ENCODE measurements at regions of chr7 and their contacts with region 1.

Region 1: DNA sequence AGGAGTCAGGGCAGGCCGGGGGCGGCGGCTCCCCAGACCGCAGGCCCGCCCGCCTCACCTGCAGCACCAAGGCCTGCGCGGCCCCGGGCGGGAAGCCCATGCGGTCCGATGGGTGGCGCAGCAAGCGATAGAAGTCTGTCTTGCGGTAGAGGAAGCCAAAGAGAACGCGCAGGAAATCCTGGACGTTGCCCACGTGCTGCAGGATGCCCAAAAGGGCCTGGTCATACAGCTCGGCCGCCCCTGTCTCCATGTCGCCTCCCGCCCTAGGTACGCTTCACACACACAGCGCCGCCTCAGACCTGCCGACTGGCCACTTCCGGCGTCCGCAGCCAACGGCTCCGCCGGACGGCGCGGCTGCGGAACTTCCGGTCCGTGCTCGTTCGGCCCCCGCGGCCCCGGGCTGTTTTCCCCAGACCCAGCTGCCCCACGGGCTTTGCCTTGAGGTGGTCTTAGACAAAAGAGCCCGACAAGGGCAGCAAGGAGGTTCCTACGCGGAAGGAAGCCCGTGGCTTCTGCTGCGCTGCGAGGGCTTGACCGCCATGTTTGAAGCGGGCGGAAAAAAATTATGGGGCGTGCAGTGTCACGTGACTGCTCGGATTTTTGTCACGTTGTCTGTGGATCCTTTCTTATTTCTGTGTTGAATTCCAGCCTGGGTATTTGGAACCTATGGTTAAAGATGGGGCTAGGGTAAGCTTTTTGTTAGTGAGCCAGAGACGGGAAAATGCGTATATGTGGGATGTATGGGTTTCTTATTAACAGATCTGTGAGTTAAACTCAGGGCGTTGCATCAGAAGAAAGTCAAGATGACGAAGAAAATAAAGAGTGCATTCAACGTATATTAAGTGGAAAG is at the start of gene NUDCD3:
- DNase-seq: peak; percentile 83
- ATAC-seq: peak; percentile 86 to 91
- H3K4me3 ChIP-seq: peak within 1 kb of the TSS; percentile 76 to 96 (median 88)
- H3K27ac ChIP-seq: peak within 1 kb of the TSS; percentile 90 to 99 (median 96)
- H3K4me1 ChIP-seq: peaks cover 39 to 40% of the 10 kb centered on the region in 2 donors
- H3K27me3 ChIP-seq: no peaks in the 10 kb centered on the region
- CTCF ChIP-seq: peak; percentile 7 to 48 (median 23)
- POLR2A ChIP-seq: peak; percentile 64 to 80
- total RNA-seq, gene NUDCD3: 76.2 to 93.4 (median 77.0) TPM

Region 2: GRCh38 chr7:43869006-43869866 is 621.3 kb before region 1 on chr7 and contains the start of gene MRPS24:
- in situ Hi-C with region 1: no loop called
- intact Hi-C with region 1: loop called (anchors 10 kb)
- DNase-seq: peak; percentile 94 to 96
- ATAC-seq: peak; percentile 82 to 89
- H3K4me3 ChIP-seq: peak within 1 kb of the TSS; percentile 77 to 94 (median 82)
- H3K27ac ChIP-seq: peak within 1 kb of the TSS; percentile 89 to 94 (median 92)
- H3K4me1 ChIP-seq: peaks cover 30 to 37% of the 10 kb centered on the region in 2 donors
- H3K27me3 ChIP-seq: no peaks in the 10 kb centered on the region
- CTCF ChIP-seq: no peak
- POLR2A ChIP-seq: peak; percentile 57 to 66
- total RNA-seq, gene MRPS24: 173 to 294 (median 255) TPM

Region 3: GRCh38 chr7:44123190-44124003 is 367.2 kb before region 1 on chr7 and contains the start of gene POLD2:
- in situ Hi-C with region 1: no loop called
- intact Hi-C with region 1: loop called (anchors 10 kb)
- DNase-seq: peak; percentile 97 to 98
- ATAC-seq: peak; percentile 95 to 96
- H3K4me3 ChIP-seq: peak within 1 kb of the TSS; percentile 62 to 92 (median 72)
- H3K27ac ChIP-seq: peak within 1 kb of the TSS; percentile 88 to 95 (median 88)
- H3K4me1 ChIP-seq: peaks cover 19 to 31% of the 10 kb centered on the region in 2 donors
- H3K27me3 ChIP-seq: no peaks in the 10 kb centered on the region
- CTCF ChIP-seq: peak in 2 of 5 experiments; percentile 7 to 10
- POLR2A ChIP-seq: peak; percentile 90 to 93
- total RNA-seq, gene POLD2: 69.4 to 93.0 (median 77.7) TPM

Region 4: DNA sequence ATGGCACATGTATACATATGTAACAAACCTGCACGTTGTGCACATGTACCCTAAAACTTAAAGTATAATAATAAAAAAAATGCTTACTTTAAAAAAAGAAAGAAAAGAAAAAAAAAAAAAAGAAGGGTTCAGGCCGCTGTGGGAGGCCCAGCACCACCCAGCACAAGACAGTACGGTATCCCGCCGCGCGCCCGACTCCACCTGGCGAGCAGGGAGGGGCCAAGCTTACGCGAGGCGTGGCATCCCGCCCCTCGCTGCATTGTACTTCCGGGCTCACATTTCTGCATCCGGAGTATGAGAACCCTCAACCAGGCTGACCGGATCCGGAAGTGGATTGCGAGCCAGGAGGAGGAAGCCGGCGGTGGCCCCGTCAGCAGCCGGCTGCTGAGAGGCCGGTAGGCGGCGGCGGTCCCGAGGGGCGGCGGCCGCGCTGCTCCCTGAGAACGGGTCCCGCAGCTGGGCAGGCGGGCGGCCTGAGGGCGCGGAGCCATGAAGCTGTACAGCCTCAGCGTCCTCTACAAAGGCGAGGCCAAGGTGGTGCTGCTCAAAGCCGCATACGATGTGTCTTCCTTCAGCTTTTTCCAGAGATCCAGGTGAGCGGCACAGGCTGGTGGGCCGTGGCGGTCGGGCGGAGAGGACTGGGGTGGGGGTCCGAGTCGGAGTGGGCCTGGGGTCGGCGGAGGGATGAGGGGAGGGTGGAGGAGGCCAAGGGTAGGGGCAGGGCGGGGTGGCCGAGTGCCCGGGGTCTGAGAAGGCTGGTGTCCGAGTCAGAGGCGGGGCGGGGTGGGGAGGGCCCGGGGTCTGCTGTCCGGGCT is 289.7 kb before region 1 on chr7 and contains the start of gene YKT6:
- in situ Hi-C with region 1: loop called in 1 of 4 experiments (anchors 25 kb)
- intact Hi-C with region 1: no loop called
- DNase-seq: peak; percentile 93 to 94
- ATAC-seq: peak; percentile 99 to 100
- H3K4me3 ChIP-seq: peak within 1 kb of the TSS; percentile 80 to 98 (median 91)
- H3K27ac ChIP-seq: peak within 1 kb of the TSS; percentile 79 to 91 (median 86)
- H3K4me1 ChIP-seq: peaks cover 14% of the 10 kb centered on the region in 2 donors
- H3K27me3 ChIP-seq: no peaks in the 10 kb centered on the region
- CTCF ChIP-seq: peak; percentile 66 to 74 (median 70)
- POLR2A ChIP-seq: peak; percentile 77 to 92
- total RNA-seq, gene YKT6: 37.9 to 79.5 (median 72.5) TPM

Region 5: DNA sequence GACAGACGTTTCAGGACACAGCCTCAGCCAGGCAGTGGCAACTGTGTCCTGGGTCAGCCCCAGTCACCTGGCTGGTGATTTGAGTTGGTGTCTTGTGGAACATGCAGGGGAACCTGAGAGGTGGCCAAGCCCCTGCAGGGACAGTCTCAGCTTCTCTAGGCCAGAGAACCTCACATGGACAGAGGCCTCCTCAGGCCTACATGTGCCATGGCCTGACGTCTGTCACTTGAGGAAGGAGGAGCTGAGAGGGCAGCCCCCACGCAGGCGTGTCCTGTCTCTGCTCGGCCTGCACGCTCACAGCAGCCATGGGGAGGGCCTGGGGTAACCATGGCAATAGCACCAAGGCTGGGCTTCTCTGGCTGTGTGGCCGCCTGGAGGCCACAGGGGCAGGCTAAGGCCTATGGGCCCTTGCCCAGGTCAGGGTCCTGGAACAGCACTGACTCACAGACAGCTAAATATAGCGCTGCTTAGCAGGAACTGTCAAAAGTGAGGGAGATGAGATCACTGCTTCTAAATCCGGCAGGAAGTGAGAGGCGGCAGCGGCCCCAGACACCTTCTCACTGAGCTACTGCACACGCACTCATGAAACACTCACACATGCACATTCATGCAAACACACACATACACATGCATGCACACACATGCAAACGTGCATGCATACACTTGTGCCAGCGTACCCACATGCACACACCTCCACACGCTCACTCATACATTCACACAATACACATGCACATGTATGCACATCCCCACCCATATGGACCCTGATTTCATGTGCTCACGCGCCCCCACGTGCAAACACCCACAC is 232.8 kb before region 1 on chr7:
- in situ Hi-C with region 1: no loop called
- intact Hi-C with region 1: loop called (anchors 5 kb)
- DNase-seq: peak; percentile 78 to 91
- ATAC-seq: peak; percentile 91
- H3K4me3 ChIP-seq: no peak overlapping the region
- H3K27ac ChIP-seq: peak overlapping the region; percentile 87 to 99 (median 96)
- H3K4me1 ChIP-seq: peaks cover 59 to 61% of the 10 kb centered on the region in 2 donors
- H3K27me3 ChIP-seq: no peaks in the 10 kb centered on the region
- CTCF ChIP-seq: peak in 2 of 5 experiments; percentile 25 to 42
- POLR2A ChIP-seq: peak in 1 of 2 donors; percentile 29

Region 6: GRCh38 chr7:44573464-44574286 is 83.1 kb after region 1 on chr7 and contains the start of gene DDX56:
- in situ Hi-C with region 1: no loop called
- intact Hi-C with region 1: loop called (anchors 2 kb)
- DNase-seq: peak; percentile 92 to 93
- ATAC-seq: peak; percentile 99
- H3K4me3 ChIP-seq: peak within 1 kb of the TSS; percentile 88 to 99 (median 96)
- H3K27ac ChIP-seq: peak within 1 kb of the TSS; percentile 88 to 98 (median 93)
- H3K4me1 ChIP-seq: peaks cover 24 to 27% of the 10 kb centered on the region in 2 donors
- H3K27me3 ChIP-seq: no peaks in the 10 kb centered on the region
- CTCF ChIP-seq: no peak
- POLR2A ChIP-seq: peak; percentile 89 to 95
- total RNA-seq, gene DDX56: 57.7 to 73.2 (median 66.1) TPM

Region 7: GRCh38 chr7:45278763-45279398 is 788.3 kb after region 1 on chr7:
- in situ Hi-C with region 1: no loop called
- intact Hi-C with region 1: no loop called
- DNase-seq: no peak
- ATAC-seq: no peak
- H3K4me3 ChIP-seq: no peak overlapping the region
- H3K27ac ChIP-seq: no peak overlapping the region
- H3K4me1 ChIP-seq: no peaks in the 10 kb centered on the region
- H3K27me3 ChIP-seq: no peaks in the 10 kb centered on the region
- CTCF ChIP-seq: no peak
- POLR2A ChIP-seq: no peak